Adrenal gland (tissue), 19 donors: ENCODE measurements at regions of chr1 and their contacts with region 1.

Region 1: GRCh38 chr1:65419681-65420589 is 533 bp upstream of the LEPR start:
- DNase-seq: peak; percentile 99 to 100 (median 99)
- H3K4me3 ChIP-seq: peak overlapping the region; percentile 21 to 92 (median 58)
- H3K27ac ChIP-seq: peak overlapping the region; percentile 59 to 100 (median 99)
- H3K4me1 ChIP-seq: peaks cover 22 to 37% of the 10 kb centered on the region in 2 donors
- H3K27me3 ChIP-seq: no peaks in the 10 kb centered on the region
- CTCF ChIP-seq: no peak
- POLR2A ChIP-seq: peak; percentile 13 to 67

Region 2: DNA sequence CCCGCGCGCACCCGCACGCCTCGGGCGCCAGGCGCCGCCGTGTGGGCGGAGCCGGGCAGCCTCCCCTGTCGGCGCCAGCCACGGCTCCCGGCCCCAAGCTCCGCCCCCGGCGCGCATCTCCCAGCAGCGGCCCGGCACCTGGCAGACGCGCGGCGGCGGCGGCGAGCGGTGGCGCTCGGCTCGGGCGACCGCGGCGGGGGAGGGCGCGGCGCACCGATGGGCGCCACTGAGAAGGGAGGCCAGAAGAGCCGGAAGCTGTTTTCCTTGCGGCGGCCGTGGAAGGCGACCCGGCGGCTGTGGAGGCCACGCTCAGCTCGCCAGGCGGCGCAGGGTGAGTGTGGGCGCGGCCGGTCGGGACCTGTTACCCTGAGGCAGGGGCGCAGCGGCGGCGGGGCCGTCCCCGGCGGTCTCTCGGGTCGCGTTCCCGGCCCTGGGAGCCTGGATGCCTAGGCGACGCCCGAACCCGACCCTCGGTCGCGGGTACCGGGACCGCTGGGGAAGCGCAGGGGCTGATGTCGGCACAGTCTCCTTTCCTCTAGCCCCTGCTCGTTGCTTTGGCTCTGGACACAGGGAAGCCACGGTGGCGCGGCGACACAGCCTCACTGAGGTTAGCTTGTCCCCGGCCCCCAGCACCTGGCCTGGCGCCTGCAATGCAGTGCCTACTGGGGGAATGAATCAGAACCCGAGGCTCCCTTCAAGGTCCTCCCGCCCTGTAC is 165.5 kb before region 1 on chr1:
- intact Hi-C with region 1: loop called in 1 of 2 experiments (anchors 10 kb)
- DNase-seq: peak; percentile 68 to 87 (median 84)
- H3K4me3 ChIP-seq: peak overlapping the region; percentile 9 to 90 (median 44)
- H3K27ac ChIP-seq: peak overlapping the region in 4 of 5 donors; percentile 61 to 84 (median 75)
- H3K4me1 ChIP-seq: peaks cover 5 to 26% of the 10 kb centered on the region in 2 donors
- H3K27me3 ChIP-seq: no peaks in the 10 kb centered on the region
- CTCF ChIP-seq: peak in 1 of 6 experiments; percentile 6
- POLR2A ChIP-seq: peak; percentile 86 to 88